Activated CD4-positive, alpha-beta T cell treated with anti-CD3 and anti-CD28 coated beads, Interleukin-2, amount 10 ng/mL, durations not matched to agents 7 days and 5 days (primary cell): ENCODE measurements at regions of chr14 and their contacts with region 1.

Region 1: DNA sequence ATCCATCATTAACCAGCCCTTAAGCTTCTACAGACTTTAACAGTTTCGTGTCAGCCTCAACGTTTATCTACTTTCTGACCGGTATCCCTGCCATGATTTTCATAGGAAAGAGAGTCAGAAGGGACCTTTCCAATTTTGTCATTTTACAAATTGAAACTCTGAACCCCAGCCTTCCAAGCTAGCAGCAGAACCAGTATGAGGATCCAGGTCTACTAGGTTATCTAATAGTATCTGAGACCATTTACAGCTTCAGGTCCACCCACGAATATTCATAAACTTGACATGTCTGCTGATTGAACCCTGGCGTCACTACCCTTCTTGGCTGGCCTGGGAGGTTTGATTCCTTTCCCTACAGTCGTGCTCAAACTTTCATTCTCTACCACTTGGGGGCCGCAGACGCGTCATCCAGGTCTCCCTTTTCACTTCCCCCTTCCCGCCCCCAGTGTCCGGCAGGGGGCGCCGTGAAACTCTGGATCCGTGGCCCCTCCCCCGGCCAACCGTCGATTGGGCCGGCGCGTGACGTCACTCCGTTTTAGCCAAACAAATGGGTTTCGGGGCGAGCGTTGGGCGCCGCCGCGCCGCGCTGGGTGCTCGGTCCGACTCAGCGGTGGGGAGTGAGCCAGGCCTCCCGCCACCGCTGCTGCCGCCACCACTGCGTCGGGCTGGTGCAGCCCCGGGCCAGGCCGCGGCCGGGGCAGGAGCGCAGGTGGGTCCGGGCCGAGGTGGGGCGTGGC is at the start of gene FBXO34:
- DNase-seq: peak; percentile 99
- H3K4me3 Mint-ChIP-seq: peak within 1 kb of the TSS; percentile 81
- H3K27ac Mint-ChIP-seq: peak within 1 kb of the TSS; percentile 96
- H3K4me1 Mint-ChIP-seq: peaks cover 41% of the 10 kb centered on the region
- H3K27me3 Mint-ChIP-seq: no peaks in the 10 kb centered on the region
- total RNA-seq, gene FBXO34: 23.0 to 23.6 TPM

Region 2: GRCh38 chr14:54976316-54976715 is 294.7 kb before region 1 on chr14:
- CTCF ChIA-PET with region 1: no interaction called
- POLR2A ChIA-PET with region 1: no interaction called
- DNase-seq: no peak
- H3K4me3 Mint-ChIP-seq: no peak overlapping the region
- H3K27ac Mint-ChIP-seq: no peak overlapping the region
- H3K4me1 Mint-ChIP-seq: peaks cover 16% of the 10 kb centered on the region
- H3K27me3 Mint-ChIP-seq: no peaks in the 10 kb centered on the region

Region 3: DNA sequence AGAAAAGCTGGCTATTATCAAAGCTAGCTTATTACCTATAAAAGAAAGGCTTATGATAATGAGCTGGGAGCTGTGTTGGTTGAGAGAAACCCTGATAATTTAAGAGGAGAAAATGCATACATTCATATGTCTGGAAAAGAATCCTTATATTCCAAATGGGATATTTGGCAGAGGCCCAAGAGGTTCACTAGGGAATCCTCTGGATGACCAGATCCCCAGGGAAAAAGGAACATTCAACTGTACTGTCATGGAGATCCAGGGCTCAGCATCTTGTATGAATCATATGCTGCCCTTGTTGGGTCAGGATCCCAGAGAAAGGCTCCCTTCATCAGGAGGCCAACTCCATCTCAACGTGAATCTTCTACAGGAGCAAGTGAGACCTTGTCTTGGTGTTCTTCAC is 16.4 kb before region 1 on chr14:
- CTCF ChIA-PET with region 1: interaction called, 12 read pairs
- POLR2A ChIA-PET with region 1: interaction called, 5 read pairs
- DNase-seq: no peak
- H3K4me3 Mint-ChIP-seq: no peak overlapping the region
- H3K27ac Mint-ChIP-seq: no peak overlapping the region
- H3K4me1 Mint-ChIP-seq: no peaks in the 10 kb centered on the region
- H3K27me3 Mint-ChIP-seq: peaks cover 12% of the 10 kb centered on the region

Region 4: DNA sequence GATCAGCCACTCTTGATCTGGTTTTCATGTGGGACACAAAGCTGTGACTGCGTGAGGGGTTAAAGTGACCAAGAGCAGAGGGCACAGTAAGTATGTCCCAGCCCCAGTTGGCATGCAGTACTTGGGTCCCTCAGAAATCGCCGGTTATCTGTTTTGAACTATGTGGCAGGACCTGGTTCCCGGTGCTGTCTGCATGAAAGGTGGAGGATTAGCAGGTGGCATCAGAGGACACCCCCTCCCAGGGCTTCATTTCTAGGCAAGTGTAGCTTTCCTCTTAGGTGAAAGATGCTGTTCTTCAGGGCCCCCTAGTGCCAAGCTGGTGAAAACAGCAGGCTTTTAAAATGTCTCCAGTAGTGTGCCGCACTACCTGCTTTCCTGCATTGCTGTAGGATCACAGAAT is 83.5 kb after region 1 on chr14:
- CTCF ChIA-PET with region 1: interaction called, 30 read pairs
- POLR2A ChIA-PET with region 1: no interaction called
- DNase-seq: peak; percentile 74
- H3K4me3 Mint-ChIP-seq: no peak overlapping the region
- H3K27ac Mint-ChIP-seq: peak overlapping the region; percentile 84
- H3K4me1 Mint-ChIP-seq: peaks cover 30% of the 10 kb centered on the region
- H3K27me3 Mint-ChIP-seq: no peaks in the 10 kb centered on the region